ENCODE measurements at regions of chr4 and their contacts with region 1.

Region 1: GRCh38 chr4:22897520-22898108 is 204.9 kb downstream of the GBA3 start:
- DNase-seq: no peak
- ATAC-seq: no peak

Region 2: GRCh38 chr4:23084559-23085248 is 187.1 kb after region 1 on chr4:
- intact Hi-C with region 1: loop called (anchors 5 kb)
- DNase-seq: no peak
- ATAC-seq: no peak

Region 3: DNA sequence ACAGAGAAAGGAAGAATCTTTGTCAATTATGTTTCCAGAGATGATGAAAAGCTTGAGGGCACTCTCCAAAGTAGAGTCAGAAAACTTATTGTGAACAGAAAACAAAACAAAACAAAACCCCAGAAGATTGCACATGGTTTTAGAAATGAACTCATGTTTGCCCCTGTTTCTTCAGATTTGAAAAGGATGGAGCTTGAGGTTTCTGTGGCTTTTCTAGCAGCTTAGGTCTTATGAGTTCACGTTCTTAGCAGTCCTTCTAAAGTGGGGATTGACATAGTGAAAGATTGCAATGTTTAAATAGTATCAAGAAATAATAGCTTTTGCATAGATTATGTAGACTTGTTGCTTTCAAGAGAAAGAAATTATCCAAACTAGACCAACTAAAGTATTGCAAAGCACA is 216.9 kb after region 1 on chr4:
- intact Hi-C with region 1: no loop called
- DNase-seq: no peak
- ATAC-seq: no peak